SK-N-SH (cell line): ENCODE measurements at regions of chr7 and their contacts with region 1.

Region 1: DNA sequence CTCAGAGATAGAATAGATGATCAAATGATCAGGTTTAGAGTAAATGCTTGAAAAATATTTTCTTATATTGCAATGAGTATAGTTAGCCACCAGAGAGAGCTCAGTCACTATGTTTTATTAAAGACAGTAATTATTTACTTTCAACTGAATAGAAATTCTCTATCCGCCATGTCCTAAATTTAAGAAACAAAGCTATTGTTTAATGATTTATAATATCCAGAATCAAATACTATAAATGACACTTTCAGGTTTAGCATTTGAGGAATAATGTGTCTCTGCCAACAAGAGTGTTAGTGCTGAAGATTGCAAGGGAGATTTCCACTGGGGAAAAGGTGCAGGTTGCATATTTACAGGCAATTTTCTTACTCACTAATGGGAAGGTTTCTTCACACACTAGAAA is 184.7 kb downstream of the DGKB start:
- DNase-seq: peak; percentile 40
- H3K4me3 ChIP-seq: no peak overlapping the region
- H3K27ac ChIP-seq: no peak overlapping the region
- H3K4me1 ChIP-seq: no peaks in the 10 kb centered on the region
- H3K27me3 ChIP-seq: no peaks in the 10 kb centered on the region
- CTCF ChIP-seq: peak; percentile 97
- EP300 ChIP-seq: no peak
- RAD21 ChIP-seq: peak; percentile 91

Region 2: GRCh38 chr7:14685167-14685566 is 32.6 kb before region 1 on chr7:
- CTCF ChIA-PET with region 1: no interaction called
- POLR2A ChIA-PET with region 1: no interaction called
- DNase-seq: no peak
- H3K4me3 ChIP-seq: no peak overlapping the region
- H3K27ac ChIP-seq: peak overlapping the region in 1 of 2 experiments; percentile 16; a peak in 1 of 4 replicates
- H3K4me1 ChIP-seq: peaks cover 0 to 33% of the 10 kb centered on the region in 2 experiments; a peak in 3 of 4 replicates
- H3K27me3 ChIP-seq: no peaks in the 10 kb centered on the region
- CTCF ChIP-seq: no peak
- EP300 ChIP-seq: no peak
- RAD21 ChIP-seq: no peak

Region 3: GRCh38 chr7:14698239-14698638 is 19.6 kb before region 1 on chr7:
- CTCF ChIA-PET with region 1: interaction called, 17 read pairs
- POLR2A ChIA-PET with region 1: no interaction called
- DNase-seq: no peak
- H3K4me3 ChIP-seq: no peak overlapping the region
- H3K27ac ChIP-seq: no peak overlapping the region
- H3K4me1 ChIP-seq: no peaks in the 10 kb centered on the region; a peak in 1 of 4 replicates
- H3K27me3 ChIP-seq: no peaks in the 10 kb centered on the region
- CTCF ChIP-seq: peak; percentile 59
- EP300 ChIP-seq: no peak
- RAD21 ChIP-seq: peak; percentile 50

Region 4: GRCh38 chr7:15007507-15007906 is 289.7 kb after region 1 on chr7:
- CTCF ChIA-PET with region 1: interaction called, 21 read pairs
- POLR2A ChIA-PET with region 1: no interaction called
- DNase-seq: peak; percentile 1
- H3K4me3 ChIP-seq: no peak overlapping the region
- H3K27ac ChIP-seq: no peak overlapping the region
- H3K4me1 ChIP-seq: no peaks in the 10 kb centered on the region
- H3K27me3 ChIP-seq: no peaks in the 10 kb centered on the region
- CTCF ChIP-seq: peak; percentile 54
- EP300 ChIP-seq: no peak
- RAD21 ChIP-seq: peak; percentile 56